Activated CD4-positive, alpha-beta T cell treated with anti-CD3 and anti-CD28 coated beads for 36 hours (primary cell): ENCODE measurements at regions of chr17 and their contacts with region 1.

Region 1: GRCh38 chr17:39863918-39864746 is at the start of gene IKZF3:
- DNase-seq: peak; percentile 93
- ATAC-seq: peak; percentile 75
- H3K4me3 Mint-ChIP-seq: peak within 1 kb of the TSS; percentile 98
- H3K27ac Mint-ChIP-seq: peak within 1 kb of the TSS; percentile 97
- H3K4me1 Mint-ChIP-seq: peaks cover 67% of the 10 kb centered on the region
- H3K27me3 Mint-ChIP-seq: no peaks in the 10 kb centered on the region
- total RNA-seq, gene IKZF3: 37.6 to 50.4 TPM

Region 2: GRCh38 chr17:39636927-39637736 is 227.0 kb before region 1 on chr17 and contains the start of gene STARD3:
- CTCF ChIA-PET with region 1: no interaction called
- POLR2A ChIA-PET with region 1: no interaction called
- intact Hi-C with region 1: loop called (anchors 2 to 5 kb)
- DNase-seq: peak; percentile 96
- ATAC-seq: peak; percentile 87
- H3K4me3 Mint-ChIP-seq: peak within 1 kb of the TSS; percentile 86
- H3K27ac Mint-ChIP-seq: peak within 1 kb of the TSS; percentile 83
- H3K4me1 Mint-ChIP-seq: peaks cover 51% of the 10 kb centered on the region
- H3K27me3 Mint-ChIP-seq: no peaks in the 10 kb centered on the region
- total RNA-seq, gene STARD3: 46.8 to 77.9 TPM

Region 3: DNA sequence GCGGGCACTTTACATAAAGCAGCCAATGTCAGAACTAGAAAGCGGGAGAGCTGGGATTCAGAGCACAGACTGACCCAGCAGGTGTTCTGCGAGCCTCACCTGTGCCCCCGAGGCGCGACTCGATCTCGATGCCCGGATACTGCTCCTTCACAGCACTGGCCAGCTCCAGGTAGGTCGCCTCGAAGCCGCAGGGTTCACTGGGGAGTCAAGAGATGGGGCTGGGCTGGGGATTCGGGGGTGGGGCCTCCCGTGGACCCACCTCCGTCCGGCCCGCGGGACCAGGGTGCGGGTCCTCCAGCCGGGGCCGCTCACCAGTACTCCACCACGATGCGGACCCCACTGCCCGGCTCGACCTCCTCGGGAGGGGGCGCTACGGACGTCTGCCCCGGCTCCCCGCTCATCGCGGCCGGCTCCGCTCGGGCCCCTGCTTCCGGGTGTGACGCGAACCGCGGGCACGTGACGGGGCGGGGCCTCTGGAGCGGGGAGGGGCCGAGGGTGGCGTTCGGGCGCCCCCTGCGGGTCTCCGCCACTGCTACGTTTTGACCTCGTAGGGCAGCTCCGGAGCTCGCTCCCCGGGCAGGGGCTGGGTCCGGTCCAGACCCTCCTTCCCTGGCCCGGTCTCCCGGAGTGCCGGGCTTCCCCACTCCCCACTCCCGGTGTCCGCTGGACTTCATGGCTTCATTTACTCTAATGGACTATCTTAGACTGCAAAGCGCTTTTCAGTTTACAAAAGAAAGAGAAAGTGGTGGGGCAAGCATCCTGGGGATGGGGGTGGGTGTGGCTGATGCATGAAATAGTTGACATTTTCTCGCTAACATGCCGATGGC is 133.8 kb before region 1 on chr17 and contains the start of gene MIEN1:
- CTCF ChIA-PET with region 1: interaction called, 3 read pairs
- POLR2A ChIA-PET with region 1: no interaction called
- intact Hi-C with region 1: loop called in 1 of 2 experiments (anchors 1 kb)
- DNase-seq: peak; percentile 97
- ATAC-seq: peak; percentile 92
- H3K4me3 Mint-ChIP-seq: peak within 1 kb of the TSS; percentile 90
- H3K27ac Mint-ChIP-seq: peak within 1 kb of the TSS; percentile 88
- H3K4me1 Mint-ChIP-seq: peaks cover 15% of the 10 kb centered on the region
- H3K27me3 Mint-ChIP-seq: no peaks in the 10 kb centered on the region
- total RNA-seq, gene MIEN1: 32.5 to 39.4 TPM

Region 4: GRCh38 chr17:39777534-39778365 is 86.4 kb before region 1 on chr17:
- CTCF ChIA-PET with region 1: interaction called, 4 read pairs
- POLR2A ChIA-PET with region 1: interaction called, 3 read pairs
- intact Hi-C with region 1: loop called in 1 of 2 experiments (anchors 1 kb)
- DNase-seq: no peak
- ATAC-seq: peak; percentile 76
- H3K4me3 Mint-ChIP-seq: peak overlapping the region; percentile 72
- H3K27ac Mint-ChIP-seq: peak overlapping the region; percentile 95
- H3K4me1 Mint-ChIP-seq: peaks cover 87% of the 10 kb centered on the region
- H3K27me3 Mint-ChIP-seq: no peaks in the 10 kb centered on the region

Region 5: GRCh38 chr17:39822051-39822451 is 42.1 kb before region 1 on chr17:
- CTCF ChIA-PET with region 1: interaction called, 7 read pairs
- POLR2A ChIA-PET with region 1: interaction called, 3 read pairs
- intact Hi-C with region 1: loop called (anchors 1 to 2 kb)
- DNase-seq: peak; percentile 41
- ATAC-seq: peak; percentile 36
- H3K4me3 Mint-ChIP-seq: no peak overlapping the region
- H3K27ac Mint-ChIP-seq: peak overlapping the region; percentile 42
- H3K4me1 Mint-ChIP-seq: peaks cover 57% of the 10 kb centered on the region
- H3K27me3 Mint-ChIP-seq: no peaks in the 10 kb centered on the region

Region 6: DNA sequence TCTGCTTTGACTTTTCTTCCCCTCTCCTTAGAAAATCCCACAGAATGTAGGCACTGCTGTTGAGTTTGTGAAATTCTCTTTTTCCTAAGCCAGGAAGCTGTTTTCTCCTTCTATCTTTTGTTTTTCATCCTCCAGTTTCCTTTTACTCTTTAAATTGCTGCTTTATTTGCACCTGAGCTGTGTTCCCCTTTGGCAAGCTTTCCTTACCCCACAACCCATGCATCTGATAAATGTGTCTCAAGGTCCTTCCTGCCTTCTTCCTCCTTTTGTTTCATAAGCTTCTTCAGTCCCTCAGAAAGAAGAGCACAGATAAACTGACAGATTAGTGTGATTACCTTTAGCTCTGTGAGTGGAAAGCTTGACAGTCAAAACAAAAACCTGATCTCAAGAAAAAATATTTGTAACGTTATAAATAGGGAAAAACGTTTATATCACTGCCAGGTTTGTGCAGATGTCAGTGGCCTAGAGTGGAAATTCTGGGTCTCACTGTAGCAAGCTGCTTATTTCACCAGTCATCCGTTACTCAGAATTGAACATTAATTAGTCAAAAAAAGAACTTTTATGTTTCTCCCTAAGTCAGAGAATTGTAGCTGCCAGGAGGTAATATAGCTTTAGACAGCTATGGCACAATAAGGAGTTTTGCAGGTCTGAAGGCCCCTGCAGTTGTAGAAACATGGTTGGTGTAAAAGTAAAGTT is 30.7 kb after region 1 on chr17:
- CTCF ChIA-PET with region 1: no interaction called
- POLR2A ChIA-PET with region 1: interaction called, 17 read pairs
- intact Hi-C with region 1: no loop called
- DNase-seq: no peak
- ATAC-seq: peak; percentile 74
- H3K4me3 Mint-ChIP-seq: no peak overlapping the region
- H3K27ac Mint-ChIP-seq: peak overlapping the region; percentile 59
- H3K4me1 Mint-ChIP-seq: peaks cover 8% of the 10 kb centered on the region
- H3K27me3 Mint-ChIP-seq: no peaks in the 10 kb centered on the region